ENCODE measurements at regions of chr22 and their contacts with region 1.

Region 1: GRCh38 chr22:23539135-23539838 is 40.8 kb downstream of the IGLL1 start:
- DNase-seq: peak; percentile 43 to 44
- H3K4me3 ChIP-seq: no peak overlapping the region
- H3K27ac ChIP-seq: no peak overlapping the region
- H3K4me1 ChIP-seq: no peaks in the 10 kb centered on the region
- H3K27me3 ChIP-seq: peaks cover 70% of the 10 kb centered on the region
- CTCF ChIP-seq: peak; percentile 79

Region 2: DNA sequence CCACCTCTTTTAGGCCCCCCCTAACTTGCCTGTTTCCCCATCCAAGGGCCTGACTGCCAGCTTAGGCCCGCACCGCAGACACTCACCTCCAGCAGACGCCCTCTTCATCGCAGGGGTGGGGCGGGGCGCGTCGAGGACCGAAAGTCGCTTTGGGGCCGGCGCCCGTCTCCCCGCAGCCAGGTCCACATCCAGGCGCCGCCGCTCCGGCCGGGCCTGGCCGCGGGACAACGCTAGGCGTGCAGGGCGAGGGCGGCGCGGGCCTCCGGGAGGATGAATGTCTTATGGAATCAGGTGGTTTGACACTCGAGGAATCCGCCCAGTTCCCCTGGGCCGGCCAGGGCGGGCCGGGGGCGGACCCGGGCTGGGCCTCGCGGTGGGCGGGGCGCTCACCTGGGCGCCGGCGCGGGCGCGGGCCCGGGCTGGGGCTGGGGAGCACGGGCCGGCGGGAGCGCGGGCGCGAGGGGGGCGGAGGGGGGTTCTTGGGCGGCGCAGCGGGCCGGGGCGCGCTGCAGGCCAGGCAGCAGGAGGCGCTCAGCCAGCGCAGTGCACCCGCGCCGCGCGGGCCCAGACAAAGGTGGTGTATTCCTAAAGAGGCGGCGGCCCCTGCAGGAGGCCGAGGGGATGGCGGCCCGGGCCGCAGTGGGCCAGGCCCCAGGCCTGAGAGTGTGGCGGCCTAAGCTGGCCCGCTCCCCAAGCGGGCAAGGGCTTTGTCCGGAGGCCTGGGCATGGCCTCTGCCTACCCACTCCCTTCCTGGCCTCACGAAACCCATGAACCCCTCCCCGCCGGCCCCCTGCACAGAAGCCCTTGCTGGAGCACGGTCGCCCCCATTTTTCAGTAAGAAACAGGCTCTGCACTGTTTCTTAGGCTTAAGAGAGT is 136.8 kb before region 1 on chr22:
- CTCF ChIA-PET with region 1: no interaction called
- POLR2A ChIA-PET with region 1: no interaction called
- intact Hi-C with region 1: loop called (anchors 10 kb)
- DNase-seq: peak in 1 of 2 experiments; percentile 66
- H3K4me3 ChIP-seq: no peak overlapping the region
- H3K27ac ChIP-seq: no peak overlapping the region
- H3K4me1 ChIP-seq: no peaks in the 10 kb centered on the region
- H3K27me3 ChIP-seq: peaks cover 12% of the 10 kb centered on the region
- CTCF ChIP-seq: peak; percentile 38; the same call in 1 of the 2 replicates

Region 3: DNA sequence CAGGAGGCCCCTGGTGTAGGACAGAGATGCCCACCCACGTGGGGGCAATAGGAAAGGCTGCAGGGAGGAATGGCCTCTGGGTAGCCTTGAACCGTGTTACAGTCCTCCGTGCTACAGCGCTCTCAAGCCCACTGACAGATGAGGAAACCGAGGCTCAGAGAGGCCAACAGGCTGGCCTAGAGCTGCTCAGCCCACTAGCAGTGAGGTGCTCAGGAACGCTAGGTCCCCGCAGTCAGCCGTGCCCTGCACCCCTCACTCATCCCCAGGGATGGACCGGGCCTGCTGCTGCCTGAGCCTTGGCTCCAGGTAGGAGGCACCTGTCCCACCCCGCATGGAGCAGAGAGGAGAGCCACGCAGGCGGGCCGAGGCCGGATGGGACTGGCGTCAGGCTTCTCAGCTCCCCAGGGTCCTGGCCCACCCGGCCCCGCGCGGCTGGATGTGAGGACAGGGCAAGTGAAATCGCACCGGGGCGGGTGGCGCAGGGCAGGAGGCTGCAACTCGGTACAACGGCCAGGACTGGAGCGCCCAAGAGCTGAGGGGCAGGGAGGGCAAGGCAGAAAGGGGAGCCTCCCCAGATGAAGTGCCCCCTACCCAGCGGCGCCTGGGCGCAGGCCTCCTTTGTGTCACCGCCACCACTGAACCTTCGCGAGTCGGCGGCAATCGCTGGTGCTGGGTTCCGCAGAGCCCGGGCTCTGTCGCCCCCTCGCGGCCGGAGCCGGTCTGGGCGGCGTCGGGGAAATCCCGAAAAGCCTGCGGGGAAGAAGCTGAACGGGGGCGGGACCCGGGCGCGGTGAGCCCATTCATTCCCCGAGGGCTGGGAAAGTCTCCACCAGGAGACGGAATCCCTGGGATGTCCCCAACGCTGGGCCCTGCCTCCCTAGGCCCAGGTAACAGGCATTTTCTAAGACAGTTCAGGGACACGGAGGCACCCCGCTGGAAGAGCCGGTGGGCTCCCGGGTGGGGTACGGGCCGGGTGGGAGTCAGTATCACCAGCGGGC is 310.0 kb after region 1 on chr22:
- CTCF ChIA-PET with region 1: no interaction called
- POLR2A ChIA-PET with region 1: no interaction called
- intact Hi-C with region 1: loop called (anchors 5 kb)
- DNase-seq: peak; percentile 51 to 84
- H3K4me3 ChIP-seq: no peak overlapping the region
- H3K27ac ChIP-seq: no peak overlapping the region
- H3K4me1 ChIP-seq: peaks cover 13% of the 10 kb centered on the region; the same call in 1 of the 2 replicates
- H3K27me3 ChIP-seq: no peaks in the 10 kb centered on the region
- CTCF ChIP-seq: peak; percentile 91

Measured in PC-9 (cell line).